T-cell (primary cell): ENCODE measurements at regions of chr12 and their contacts with region 1.

Region 1: DNA sequence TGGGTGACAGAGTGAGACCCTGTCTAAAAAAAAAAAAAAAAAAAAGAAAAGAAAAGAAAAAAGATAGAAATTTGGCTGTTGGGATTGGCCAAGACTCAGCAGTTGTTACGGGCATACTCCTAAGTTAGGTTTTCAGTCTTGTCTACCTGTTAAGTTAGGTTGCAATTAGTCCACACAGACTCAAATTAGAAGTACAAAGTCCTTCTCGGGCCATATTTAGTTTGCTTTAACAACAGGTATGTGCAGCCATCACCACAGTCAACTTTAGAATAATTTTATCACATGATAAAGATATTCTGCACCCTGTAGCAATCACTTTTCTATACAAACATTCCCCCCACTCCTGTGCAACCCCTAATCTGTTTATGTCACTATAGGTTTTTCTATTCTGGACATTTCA is 85.2 kb downstream of the WNK1 start:
- DNase-seq: no peak
- ATAC-seq: no peak
- H3K4me3 ChIP-seq: no peak overlapping the region
- H3K4me3 Mint-ChIP-seq: no peak overlapping the region
- H3K27ac ChIP-seq: no peak overlapping the region
- H3K27ac Mint-ChIP-seq: no peak overlapping the region
- H3K4me1 ChIP-seq: peaks cover 0 to 3% of the 10 kb centered on the region in 2 experiments
- H3K4me1 Mint-ChIP-seq: peaks cover 59 to 67% (median 62%) of the 10 kb centered on the region in 3 donors
- H3K27me3 ChIP-seq: no peaks in the 10 kb centered on the region
- H3K27me3 Mint-ChIP-seq: no peaks in the 10 kb centered on the region

Region 2: DNA sequence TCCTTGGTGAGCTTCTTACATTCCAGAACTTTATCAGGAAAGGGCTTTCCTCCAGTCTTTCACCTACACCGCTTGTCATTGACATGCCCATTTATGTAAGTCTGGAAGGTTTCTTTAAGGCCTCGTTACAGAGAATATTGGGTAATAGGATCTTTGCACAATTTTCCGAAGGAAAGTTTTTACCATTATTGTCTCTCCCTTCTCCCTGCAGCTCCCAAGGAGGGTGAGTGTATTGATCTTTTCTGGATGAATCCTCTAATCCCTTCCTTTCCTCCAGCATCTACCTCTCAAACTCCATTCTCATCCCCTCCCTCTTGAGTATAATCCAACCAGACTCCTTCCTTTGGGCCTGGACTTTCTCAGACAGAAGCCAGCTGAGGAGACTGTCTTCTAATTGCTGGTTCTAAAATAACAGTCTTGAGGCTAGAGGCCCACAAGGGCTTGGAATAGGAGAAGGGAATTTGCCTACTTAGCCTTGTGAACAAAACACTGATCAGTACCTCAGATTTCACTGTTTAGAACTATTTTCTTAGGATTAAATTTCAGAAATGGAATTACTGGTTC is 63.4 kb before region 1 on chr12:
- CTCF ChIA-PET with region 1: no interaction called
- POLR2A ChIA-PET with region 1: no interaction called
- DNase-seq: no peak
- ATAC-seq: no peak
- H3K4me3 ChIP-seq: no peak overlapping the region
- H3K4me3 Mint-ChIP-seq: peak overlapping the region in 1 of 3 donors; percentile 6
- H3K27ac ChIP-seq: peak overlapping the region; percentile 39
- H3K27ac Mint-ChIP-seq: peak overlapping the region; percentile 81
- H3K4me1 ChIP-seq: peaks cover 22 to 38% of the 10 kb centered on the region in 2 experiments
- H3K4me1 Mint-ChIP-seq: peaks cover 87 to 94% (median 90%) of the 10 kb centered on the region in 3 donors
- H3K27me3 ChIP-seq: no peaks in the 10 kb centered on the region
- H3K27me3 Mint-ChIP-seq: no peaks in the 10 kb centered on the region

Region 3: DNA sequence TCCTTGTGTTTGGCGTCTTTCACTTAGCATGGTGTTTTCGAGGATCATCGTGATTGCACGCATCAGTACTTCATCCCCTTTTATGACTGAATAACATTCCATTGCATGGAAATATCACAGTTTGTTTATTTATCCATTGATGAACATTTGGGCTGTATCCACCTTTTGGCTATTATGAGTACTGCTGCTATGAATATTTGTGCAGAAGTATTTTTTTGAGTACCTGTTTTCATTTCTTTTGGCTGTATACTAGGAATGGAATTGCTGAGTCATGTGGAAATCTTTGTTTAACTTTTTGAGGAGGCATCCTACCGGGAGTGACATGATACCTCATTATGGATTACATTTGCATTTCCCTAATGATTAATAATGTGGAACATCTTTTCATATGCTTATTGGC is 18.8 kb before region 1 on chr12:
- CTCF ChIA-PET with region 1: interaction called, 7 to 10 read pairs
- POLR2A ChIA-PET with region 1: no interaction called
- DNase-seq: no peak
- ATAC-seq: no peak
- H3K4me3 ChIP-seq: no peak overlapping the region
- H3K4me3 Mint-ChIP-seq: no peak overlapping the region
- H3K27ac ChIP-seq: no peak overlapping the region
- H3K27ac Mint-ChIP-seq: peak overlapping the region; percentile 70 to 80
- H3K4me1 ChIP-seq: peaks cover 2 to 3% of the 10 kb centered on the region in 2 experiments
- H3K4me1 Mint-ChIP-seq: peaks cover 69 to 73% (median 69%) of the 10 kb centered on the region in 3 donors
- H3K27me3 ChIP-seq: no peaks in the 10 kb centered on the region
- H3K27me3 Mint-ChIP-seq: no peaks in the 10 kb centered on the region